Activated naive CD4-positive, alpha-beta T cell treated with anti-CD3 and anti-CD28 coated beads for 36 hours (primary cell): ENCODE measurements at regions of chr1 and their contacts with region 1.

Region 1: DNA sequence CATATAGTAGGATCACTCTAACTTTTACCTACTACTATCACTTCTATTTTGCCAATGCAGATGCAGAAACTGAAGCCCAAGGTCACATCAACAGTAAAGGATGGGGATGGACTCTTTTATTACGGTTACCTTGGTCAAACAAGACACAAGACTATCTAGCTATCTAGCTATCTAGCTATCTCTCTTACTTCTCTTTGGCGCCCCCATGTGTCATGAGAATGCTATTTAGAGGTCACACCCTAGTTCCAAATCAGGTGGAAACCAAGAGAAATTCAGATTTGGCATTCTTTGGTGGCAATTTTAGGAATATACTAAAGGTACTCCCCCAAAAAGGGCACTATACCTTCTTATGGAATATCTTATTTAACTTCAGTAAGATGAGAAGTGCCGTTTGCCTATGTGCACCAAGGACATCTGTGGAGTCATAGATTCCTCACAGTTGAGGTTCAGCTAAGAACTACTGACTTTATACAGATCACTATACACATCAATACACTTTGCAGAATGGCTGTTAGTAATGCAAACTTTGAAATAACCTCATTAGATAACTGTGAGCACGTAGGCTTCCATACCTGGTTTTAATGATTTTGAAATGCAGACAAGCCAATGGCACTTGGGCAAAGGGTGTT is 6.7 kb downstream of the ZNF648 start:
- DNase-seq: peak; percentile 83
- H3K4me3 Mint-ChIP-seq: no peak overlapping the region
- H3K27ac Mint-ChIP-seq: no peak overlapping the region
- H3K4me1 Mint-ChIP-seq: peaks cover 12% of the 10 kb centered on the region
- H3K27me3 Mint-ChIP-seq: peaks cover 20% of the 10 kb centered on the region

Region 2: DNA sequence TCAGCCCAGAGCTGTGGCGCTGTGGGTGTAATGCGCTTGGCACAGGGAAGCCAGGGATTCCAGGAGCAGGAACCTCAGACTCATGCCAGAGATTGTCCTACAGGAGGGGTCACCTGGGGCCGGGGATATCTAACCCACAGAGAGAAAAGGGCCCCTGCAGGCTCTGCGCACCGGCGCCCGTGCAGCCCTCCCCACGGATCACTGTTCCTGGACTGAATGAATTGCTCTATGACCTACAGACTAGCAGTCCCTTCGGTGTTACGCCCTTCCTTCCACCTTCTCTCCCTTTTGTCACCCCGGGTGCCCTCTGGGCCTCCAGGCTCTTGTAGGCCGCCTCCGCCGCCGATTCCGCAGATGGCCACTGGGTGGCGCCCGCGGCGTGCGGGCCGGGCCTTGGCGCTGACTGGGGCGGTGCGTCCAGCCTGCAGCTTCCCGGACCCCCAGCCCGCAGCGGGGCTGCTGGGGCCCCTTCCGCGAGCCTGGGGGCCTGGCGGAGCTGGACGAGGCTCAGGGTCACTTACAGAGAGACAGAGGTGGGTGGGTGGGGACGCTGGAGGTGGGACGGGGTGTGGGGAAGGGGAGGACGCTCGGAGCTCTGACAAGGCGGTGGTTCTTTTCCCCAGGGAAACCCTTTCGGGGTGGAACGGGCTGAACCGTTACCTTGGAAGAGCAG is 865.0 kb before region 1 on chr1:
- CTCF ChIA-PET with region 1: no interaction called
- intact Hi-C with region 1: loop called (anchors 10 kb)
- DNase-seq: peak; percentile 78
- H3K4me3 Mint-ChIP-seq: no peak overlapping the region
- H3K27ac Mint-ChIP-seq: no peak overlapping the region
- H3K4me1 Mint-ChIP-seq: peaks cover 2% of the 10 kb centered on the region
- H3K27me3 Mint-ChIP-seq: peaks cover 3% of the 10 kb centered on the region

Region 3: DNA sequence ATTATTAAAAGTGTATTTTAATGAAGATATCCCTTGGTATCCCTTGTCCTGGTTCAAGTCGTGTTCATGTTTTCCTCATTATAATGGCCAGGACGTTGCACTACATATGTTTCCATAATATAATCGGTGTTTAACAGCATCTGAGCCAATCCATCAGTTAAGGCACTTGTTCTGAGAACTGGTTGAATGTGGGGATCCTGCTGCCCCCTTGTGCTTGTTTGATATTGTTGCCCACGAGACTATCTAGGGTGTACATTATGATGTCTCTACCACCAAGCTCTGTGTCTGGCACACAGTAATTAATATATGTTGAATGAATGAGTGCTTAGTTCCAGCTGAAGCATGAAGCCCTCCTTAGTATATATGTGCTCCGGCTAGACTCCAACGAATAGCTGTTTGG is 378.5 kb before region 1 on chr1:
- CTCF ChIA-PET with region 1: no interaction called
- intact Hi-C with region 1: loop called (anchors 10 kb)
- DNase-seq: peak; percentile 28
- H3K4me3 Mint-ChIP-seq: no peak overlapping the region
- H3K27ac Mint-ChIP-seq: no peak overlapping the region
- H3K4me1 Mint-ChIP-seq: no peaks in the 10 kb centered on the region
- H3K27me3 Mint-ChIP-seq: peaks cover 9% of the 10 kb centered on the region

Region 4: GRCh38 chr1:181936768-181937581 is 117.8 kb before region 1 on chr1:
- CTCF ChIA-PET with region 1: interaction called, 8 read pairs
- intact Hi-C with region 1: loop called (anchors 1 kb)
- DNase-seq: peak; percentile 77
- H3K4me3 Mint-ChIP-seq: no peak overlapping the region
- H3K27ac Mint-ChIP-seq: no peak overlapping the region
- H3K4me1 Mint-ChIP-seq: peaks cover 4% of the 10 kb centered on the region
- H3K27me3 Mint-ChIP-seq: no peaks in the 10 kb centered on the region

Region 5: DNA sequence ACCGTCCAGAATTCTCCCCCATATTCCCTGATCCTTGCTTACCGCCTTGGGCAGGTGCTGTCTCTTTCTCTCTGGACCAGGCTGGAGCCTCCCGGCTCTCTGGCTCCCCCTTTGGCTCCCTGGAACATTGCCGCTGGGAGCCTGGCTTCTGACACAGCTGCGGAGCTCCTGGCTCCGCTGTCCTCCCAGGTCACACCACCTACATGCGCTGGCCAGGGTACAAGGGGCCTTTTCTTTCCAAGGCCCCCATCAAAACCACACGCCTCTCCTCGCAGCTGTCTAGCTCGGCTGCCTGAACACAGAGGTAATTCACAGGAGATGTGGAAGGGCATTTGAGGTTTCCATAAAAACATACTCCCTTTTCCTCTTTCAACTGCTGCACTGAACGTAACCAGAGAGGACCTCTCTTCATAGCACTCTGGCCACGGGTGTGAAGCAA is 14.2 kb after region 1 on chr1:
- CTCF ChIA-PET with region 1: interaction called, 11 read pairs
- intact Hi-C with region 1: no loop called
- DNase-seq: peak; percentile 51
- H3K4me3 Mint-ChIP-seq: no peak overlapping the region
- H3K27ac Mint-ChIP-seq: no peak overlapping the region
- H3K4me1 Mint-ChIP-seq: peaks cover 3% of the 10 kb centered on the region
- H3K27me3 Mint-ChIP-seq: peaks cover 17% of the 10 kb centered on the region